Esophagus muscularis mucosa (tissue), 4 donors: ENCODE measurements at regions of chr7 and their contacts with region 1.

Region 1: DNA sequence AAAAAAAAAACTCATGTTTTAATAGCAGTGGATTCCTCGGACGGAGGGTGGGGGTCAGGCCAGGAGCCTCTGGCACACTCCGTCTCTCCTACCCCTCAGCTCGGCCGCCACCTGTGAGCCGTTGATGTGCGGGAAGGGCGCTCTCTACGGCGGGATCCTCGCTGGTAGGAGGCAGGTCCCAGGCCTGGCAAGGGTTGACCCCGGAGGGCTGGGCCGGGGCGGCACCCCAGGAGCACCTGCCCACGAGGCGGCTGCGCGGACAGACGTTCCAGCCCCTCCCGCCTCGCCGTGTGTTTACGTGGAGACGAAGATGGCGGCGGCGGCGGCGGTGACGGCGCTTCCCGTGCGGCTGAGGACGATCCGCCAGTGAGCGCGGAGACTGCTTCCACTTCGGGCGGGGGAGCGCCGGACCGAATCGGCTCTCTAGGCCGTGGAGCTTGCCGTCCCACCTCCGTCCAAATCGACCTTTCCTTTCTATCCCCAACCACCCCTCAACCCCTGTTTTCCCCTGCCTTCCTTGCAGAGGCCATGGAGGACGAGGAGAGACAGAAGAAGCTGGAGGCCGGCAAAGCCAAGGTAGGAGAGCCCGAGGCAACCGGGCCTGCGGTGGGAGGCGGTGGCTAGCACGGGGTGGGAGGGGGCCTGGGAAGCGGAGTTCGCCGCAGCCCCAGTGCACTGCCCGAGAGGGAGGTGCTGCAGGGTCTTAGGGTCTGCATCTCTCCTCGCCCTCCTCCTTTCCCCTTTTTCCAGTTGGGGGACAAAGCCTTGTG is at the start of gene AKAP9:
- DNase-seq: peak; percentile 96
- H3K4me3 ChIP-seq: peak within 1 kb of the TSS; percentile 72 to 87 (median 80)
- H3K27ac ChIP-seq: peak within 1 kb of the TSS; percentile 88 to 96 (median 94)
- H3K4me1 ChIP-seq: peaks cover 30 to 48% (median 46%) of the 10 kb centered on the region in 4 donors
- H3K27me3 ChIP-seq: no peaks in the 10 kb centered on the region
- CTCF ChIP-seq: peak in 1 of 3 experiments; percentile 8
- EP300 ChIP-seq: no peak
- POLR2A ChIP-seq: no peak
- total RNA-seq, gene AKAP9: 33.6 to 60.2 (median 39.3) TPM

Region 2: GRCh38 chr7:92042056-92042737 is 101.4 kb after region 1 on chr7:
- intact Hi-C with region 1: loop called (anchors 10 kb)
- DNase-seq: no peak
- H3K4me3 ChIP-seq: no peak overlapping the region
- H3K27ac ChIP-seq: peak overlapping the region in 2 of 4 donors; percentile 34 to 61
- H3K4me1 ChIP-seq: peaks cover 11 to 33% (median 27%) of the 10 kb centered on the region in 4 donors
- H3K27me3 ChIP-seq: no peaks in the 10 kb centered on the region
- CTCF ChIP-seq: no peak
- EP300 ChIP-seq: no peak
- POLR2A ChIP-seq: no peak

Region 3: DNA sequence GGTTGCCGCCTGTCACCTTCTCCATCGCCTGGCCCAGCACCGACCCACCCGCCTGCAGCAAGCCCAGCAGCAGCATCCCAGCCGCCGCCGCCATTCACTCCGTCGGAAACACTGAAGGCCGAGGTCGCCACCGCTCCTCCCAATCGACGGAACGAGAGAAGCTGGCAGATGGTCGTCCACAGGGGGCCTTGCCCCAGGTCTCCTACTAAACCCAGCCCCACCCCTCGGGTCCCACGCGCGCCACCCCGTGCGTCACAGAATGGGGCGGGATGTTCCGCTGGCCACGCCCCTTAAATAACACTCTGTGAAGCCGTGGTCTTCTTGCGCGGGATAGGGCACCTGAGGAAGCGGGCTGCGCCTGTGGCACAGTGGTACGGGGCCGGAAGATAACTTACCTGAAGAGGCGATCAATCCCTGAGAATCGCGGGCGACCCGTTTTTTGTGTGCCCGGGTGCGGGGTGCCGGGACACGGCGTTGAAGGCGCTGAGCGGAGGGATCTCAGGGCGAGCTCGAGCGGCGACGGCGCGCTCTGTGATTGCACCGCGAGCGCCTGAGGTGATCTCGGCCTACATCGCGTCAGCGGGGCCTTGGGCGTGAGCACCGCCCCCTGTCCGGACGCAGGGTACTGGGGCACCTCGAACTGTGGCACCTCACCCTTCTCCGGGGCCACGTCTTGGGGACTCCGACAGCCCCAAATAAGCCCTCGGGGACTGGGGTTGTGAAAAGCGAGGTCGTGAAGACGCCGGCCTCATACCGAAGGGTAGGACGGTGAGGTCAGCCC is 193.7 kb after region 1 on chr7 and contains the start of gene CYP51A1:
- intact Hi-C with region 1: loop called (anchors 5 kb)
- DNase-seq: peak; percentile 99
- H3K4me3 ChIP-seq: peak within 1 kb of the TSS; percentile 72 to 100 (median 96)
- H3K27ac ChIP-seq: peak within 1 kb of the TSS; percentile 89 to 98 (median 95)
- H3K4me1 ChIP-seq: peaks cover 5 to 28% (median 25%) of the 10 kb centered on the region in 4 donors
- H3K27me3 ChIP-seq: no peaks in the 10 kb centered on the region
- CTCF ChIP-seq: peak in 1 of 3 experiments; percentile 3
- EP300 ChIP-seq: no peak
- POLR2A ChIP-seq: peak; percentile 75
- total RNA-seq, gene CYP51A1: 21.7 to 32.8 (median 27.3) TPM